Posterior cingulate gyrus (tissue), 11 donors: ENCODE measurements at regions of chr5 and their contacts with region 1.

Region 1: GRCh38 chr5:122500245-122501075 is 188.4 kb downstream of the SNCAIP start:
- DNase-seq: peak in 6 of 10 donors; percentile 16 to 84 (median 46)

Region 2: DNA sequence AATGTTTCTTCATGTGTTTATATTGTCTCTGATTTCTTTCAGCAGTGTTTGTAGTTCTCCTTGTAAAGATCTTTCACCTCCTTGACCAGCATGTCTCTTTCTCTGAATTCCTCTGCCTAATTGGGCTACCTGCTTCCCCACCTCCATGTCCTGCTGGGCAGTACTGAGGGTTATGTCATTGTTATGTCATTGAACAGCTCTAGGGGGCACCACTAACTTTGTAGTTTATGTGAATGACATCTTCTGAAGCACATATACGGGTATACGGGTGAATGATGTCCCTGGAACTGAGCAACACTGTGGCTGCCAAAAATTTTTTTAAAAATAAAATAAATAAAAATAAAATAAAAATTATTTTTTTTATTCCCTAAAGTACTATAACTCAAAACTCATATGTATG is 205.3 kb before region 1 on chr5:
- intact Hi-C with region 1: no loop called
- DNase-seq: no peak

Region 3: GRCh38 chr5:122772446-122772845 is 272.0 kb after region 1 on chr5:
- intact Hi-C with region 1: no loop called
- DNase-seq: no peak

Region 4: DNA sequence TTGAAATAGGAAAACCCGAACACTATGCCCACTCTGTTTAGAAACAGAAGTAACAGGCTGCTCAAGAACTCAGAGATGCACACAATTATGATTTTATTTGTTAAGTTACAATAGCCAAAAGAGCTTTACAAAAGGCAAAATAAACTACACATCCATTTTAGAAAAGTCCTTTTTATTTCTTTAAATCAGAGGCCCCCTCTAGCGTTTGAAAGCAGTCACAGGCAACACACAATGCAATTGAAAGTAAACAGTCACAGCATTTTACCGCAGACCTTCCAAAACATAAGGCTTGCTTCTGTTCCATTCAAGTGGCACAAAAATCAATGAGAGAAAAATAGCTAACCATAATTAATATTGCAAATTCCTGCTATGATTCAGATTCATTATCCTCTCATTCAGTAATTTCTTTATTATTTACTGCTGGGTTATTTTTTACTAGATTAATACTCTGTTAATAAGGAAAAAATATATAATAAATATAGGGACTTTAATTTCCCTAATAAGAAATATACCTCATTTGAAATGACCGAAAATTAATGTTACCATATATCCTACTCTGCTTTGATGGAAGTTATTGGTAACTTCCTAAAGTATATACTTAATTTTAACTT is 844.5 kb after region 1 on chr5:
- intact Hi-C with region 1: loop called (anchors 10 kb)
- DNase-seq: no peak

Region 5: GRCh38 chr5:123610665-123611405 is 1110.4 kb after region 1 on chr5:
- intact Hi-C with region 1: loop called (anchors 5 kb)
- DNase-seq: no peak